MCF 10A (cell line): ENCODE measurements at regions of chr12 and their contacts with region 1.

Region 1: GRCh38 chr12:113422030-113422885 is at the start of gene SDSL:
- DNase-seq: peak; percentile 96
- H3K4me3 Mint-ChIP-seq: peak within 1 kb of the TSS; percentile 91
- H3K27ac Mint-ChIP-seq: peak within 1 kb of the TSS; percentile 93
- H3K4me1 Mint-ChIP-seq: peaks cover 5% of the 10 kb centered on the region
- H3K27me3 Mint-ChIP-seq: no peaks in the 10 kb centered on the region
- CTCF ChIP-seq: no peak
- total RNA-seq, gene SDSL: 21.1 and 32.7 TPM in 2 replicates

Region 2: GRCh38 chr12:113310489-113310888 is 111.8 kb before region 1 on chr12:
- CTCF ChIA-PET with region 1: interaction called, 5 read pairs
- POLR2A ChIA-PET with region 1: no interaction called
- intact Hi-C with region 1: loop called (anchors 1 kb)
- DNase-seq: peak; percentile 30
- H3K4me3 Mint-ChIP-seq: no peak overlapping the region
- H3K27ac Mint-ChIP-seq: no peak overlapping the region
- H3K4me1 Mint-ChIP-seq: peaks cover 5% of the 10 kb centered on the region
- H3K27me3 Mint-ChIP-seq: no peaks in the 10 kb centered on the region
- CTCF ChIP-seq: peak; percentile 18

Region 3: DNA sequence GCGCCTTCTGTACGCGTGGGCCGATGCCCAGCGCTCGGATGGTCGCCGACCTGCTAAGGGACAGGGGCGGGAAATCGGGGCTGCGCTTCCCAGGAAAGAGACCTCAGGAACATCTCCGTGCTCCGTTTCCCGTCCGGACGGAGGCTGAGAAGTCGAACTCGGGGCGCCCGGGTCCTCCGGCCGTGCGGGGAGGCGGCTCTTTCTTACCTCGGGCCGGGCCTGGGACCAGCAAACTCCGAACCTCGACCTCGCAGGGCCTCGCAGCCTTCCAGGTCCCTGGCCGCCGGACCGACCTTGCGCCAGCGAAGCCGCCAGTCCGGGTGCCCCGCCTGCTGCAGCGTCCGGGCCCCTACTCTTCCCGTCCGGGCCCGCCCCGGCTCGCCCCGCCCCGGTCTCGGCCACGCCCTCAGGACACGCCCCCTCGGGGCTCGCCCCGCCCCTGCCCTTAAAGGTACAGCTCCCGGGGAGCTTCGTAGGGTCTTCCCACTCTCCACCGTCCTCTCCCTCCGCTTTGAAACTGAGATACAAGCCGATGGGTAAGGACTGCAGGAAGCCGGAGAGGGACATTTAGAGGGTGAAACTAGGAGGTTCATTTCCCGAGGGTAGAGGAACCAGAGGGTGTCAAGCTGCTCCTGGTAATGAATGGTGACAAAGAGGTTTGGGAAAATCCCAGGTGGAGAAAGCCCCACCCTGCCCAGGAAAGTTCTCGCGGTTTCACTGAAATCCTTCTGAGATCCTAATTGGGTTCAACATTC is 87.3 kb before region 1 on chr12 and contains the start of gene SLC8B1:
- CTCF ChIA-PET with region 1: no interaction called
- POLR2A ChIA-PET with region 1: interaction called, 9 read pairs
- intact Hi-C with region 1: loop called (anchors 5 kb)
- DNase-seq: peak; percentile 85
- H3K4me3 Mint-ChIP-seq: peak within 1 kb of the TSS; percentile 81
- H3K27ac Mint-ChIP-seq: peak within 1 kb of the TSS; percentile 75
- H3K4me1 Mint-ChIP-seq: peaks cover under 1% of the 10 kb centered on the region
- H3K27me3 Mint-ChIP-seq: no peaks in the 10 kb centered on the region
- CTCF ChIP-seq: no peak
- total RNA-seq, gene SLC8B1: 15.7 and 19.6 TPM in 2 replicates

Region 4: DNA sequence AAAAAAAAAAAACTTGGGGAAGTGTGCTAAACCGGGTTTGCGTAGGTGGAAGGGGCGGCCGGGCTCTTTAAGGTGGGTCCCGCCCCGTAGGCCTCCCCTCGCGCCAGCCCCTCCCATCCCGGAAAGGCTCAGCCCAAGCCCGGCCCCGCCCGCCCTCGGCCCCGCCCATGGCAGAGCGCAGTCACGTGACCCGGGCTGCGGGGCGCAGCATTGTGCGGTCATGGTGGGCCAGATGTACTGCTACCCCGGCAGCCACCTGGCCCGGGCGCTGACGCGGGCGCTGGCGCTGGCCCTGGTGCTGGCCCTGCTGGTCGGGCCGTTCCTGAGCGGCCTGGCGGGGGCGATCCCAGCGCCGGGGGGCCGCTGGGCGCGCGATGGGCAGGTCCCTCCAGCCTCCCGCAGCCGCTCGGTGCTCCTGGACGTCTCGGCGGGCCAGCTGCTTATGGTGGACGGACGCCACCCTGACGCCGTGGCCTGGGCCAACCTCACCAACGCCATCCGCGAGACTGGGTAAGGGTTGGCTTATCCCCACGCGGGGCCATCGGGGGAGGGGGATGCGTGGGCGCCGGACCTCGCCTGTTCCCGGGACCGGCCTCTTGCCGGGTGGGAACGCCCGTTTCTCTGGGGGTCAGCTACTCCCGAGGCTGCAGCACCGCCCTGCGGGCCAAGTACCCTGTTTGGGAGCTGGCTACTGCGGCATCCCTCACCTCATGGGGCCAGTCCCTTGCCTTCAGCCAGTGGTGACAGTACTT is 63.7 kb before region 1 on chr12 and contains the start of gene PLBD2:
- CTCF ChIA-PET with region 1: interaction called, 3 read pairs
- POLR2A ChIA-PET with region 1: interaction called, 3 read pairs
- intact Hi-C with region 1: loop called (anchors 2 kb)
- DNase-seq: peak; percentile 91
- H3K4me3 Mint-ChIP-seq: peak within 1 kb of the TSS; percentile 85
- H3K27ac Mint-ChIP-seq: peak within 1 kb of the TSS; percentile 83
- H3K4me1 Mint-ChIP-seq: peaks cover 9% of the 10 kb centered on the region
- H3K27me3 Mint-ChIP-seq: no peaks in the 10 kb centered on the region
- CTCF ChIP-seq: no peak
- total RNA-seq, gene PLBD2: 18.1 and 24.0 TPM in 2 replicates

Region 5: DNA sequence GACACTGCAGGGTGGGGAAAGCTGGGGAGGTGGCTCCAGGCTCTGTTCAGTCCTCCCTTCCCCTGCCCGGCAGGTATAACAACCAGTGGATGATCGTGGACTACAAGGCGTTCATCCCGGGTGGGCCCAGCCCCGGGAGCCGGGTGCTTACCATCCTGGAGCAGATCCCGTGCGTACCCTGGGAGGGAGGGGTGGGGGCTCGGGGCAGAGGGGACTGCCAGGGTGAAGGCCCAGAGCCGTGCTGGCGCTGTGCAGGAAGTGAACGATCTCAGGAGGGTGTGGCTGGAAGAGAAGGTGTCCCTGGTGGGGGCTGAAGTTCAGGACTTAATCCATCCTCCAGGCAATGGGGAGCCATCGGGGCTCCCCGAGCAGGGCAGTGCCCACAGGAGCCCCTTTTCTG is 37.5 kb before region 1 on chr12:
- CTCF ChIA-PET with region 1: interaction called, 3 read pairs
- POLR2A ChIA-PET with region 1: no interaction called
- intact Hi-C with region 1: loop called (anchors 1 kb)
- DNase-seq: no peak
- H3K4me3 Mint-ChIP-seq: no peak overlapping the region
- H3K27ac Mint-ChIP-seq: no peak overlapping the region
- H3K4me1 Mint-ChIP-seq: no peaks in the 10 kb centered on the region
- H3K27me3 Mint-ChIP-seq: no peaks in the 10 kb centered on the region
- CTCF ChIP-seq: no peak

Region 6: DNA sequence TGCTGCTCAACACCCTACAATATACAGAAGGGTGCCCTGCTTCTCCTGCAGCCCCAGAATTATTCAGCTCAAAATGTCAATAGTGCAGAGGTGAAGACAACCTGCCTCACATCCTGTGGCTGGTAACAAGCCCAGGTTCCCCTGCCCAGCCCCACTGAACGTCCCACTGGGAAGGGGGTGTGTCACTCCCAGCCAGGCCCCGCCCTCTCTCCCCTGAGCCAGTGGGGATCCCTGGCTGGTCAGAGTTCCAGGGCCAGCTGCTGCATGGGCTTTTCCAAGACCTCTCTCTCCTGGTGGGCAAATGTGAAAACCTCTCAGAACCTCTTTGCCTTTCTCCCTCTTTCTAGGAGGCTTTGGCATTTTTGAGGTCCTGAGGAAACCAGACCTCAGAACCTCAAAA is 63.1 kb after region 1 on chr12:
- CTCF ChIA-PET with region 1: no interaction called
- POLR2A ChIA-PET with region 1: no interaction called
- intact Hi-C with region 1: no loop called
- DNase-seq: no peak
- H3K4me3 Mint-ChIP-seq: no peak overlapping the region
- H3K27ac Mint-ChIP-seq: no peak overlapping the region
- H3K4me1 Mint-ChIP-seq: no peaks in the 10 kb centered on the region
- H3K27me3 Mint-ChIP-seq: peaks cover 84% of the 10 kb centered on the region
- CTCF ChIP-seq: no peak